Activated B cell treated with CpG ODN at 0.5 μM for 24 hours (primary cell): ENCODE measurements at regions of chr14 and their contacts with region 1.

Region 1: DNA sequence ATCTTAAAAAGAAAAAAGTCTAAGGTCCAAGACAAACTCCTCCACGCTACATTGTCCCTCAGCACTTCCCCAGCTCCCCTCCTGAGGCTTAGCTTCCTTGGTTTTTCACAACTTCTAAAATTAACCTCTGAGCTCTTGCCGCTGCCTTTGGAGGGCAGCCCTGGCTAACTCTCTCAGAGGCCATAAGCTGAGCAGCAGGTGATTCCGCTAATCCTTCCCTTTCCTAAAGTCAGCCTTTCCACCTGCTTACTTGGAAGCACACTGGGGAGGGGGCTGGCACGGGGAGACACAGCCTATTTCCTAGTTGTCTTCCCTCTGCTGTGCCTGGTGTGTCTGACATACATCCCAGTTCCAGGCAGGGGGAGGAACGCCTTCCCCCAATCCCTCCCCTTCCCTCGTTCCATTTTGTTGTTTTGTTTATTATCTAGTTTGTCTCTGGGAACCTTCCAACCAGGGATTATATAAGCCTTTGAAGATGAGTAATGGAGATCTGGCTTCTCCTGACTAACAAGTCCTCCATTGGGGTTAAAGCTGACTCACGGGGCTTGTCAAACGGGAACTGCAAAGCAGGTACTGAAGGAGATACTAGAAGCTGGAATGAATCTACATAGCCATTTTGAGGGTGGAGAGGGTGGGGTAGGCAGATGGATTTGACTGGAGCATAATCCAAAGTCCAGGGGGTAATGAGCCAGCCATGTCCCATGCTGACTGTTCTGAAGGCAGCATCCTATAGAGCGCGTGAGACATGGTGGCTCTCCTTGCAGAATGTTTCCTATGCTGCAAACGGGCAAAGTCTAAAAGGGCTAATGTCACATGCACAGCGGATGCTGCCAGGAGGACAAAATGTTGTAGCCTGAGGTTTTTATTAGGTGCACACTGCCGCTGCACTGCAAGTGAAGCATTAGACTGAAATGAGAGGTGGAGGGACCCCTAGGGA is 230.8 kb downstream of the FOXN3 start:
- DNase-seq: no peak
- ATAC-seq: no peak
- H3K4me3 Mint-ChIP-seq: peak overlapping the region; percentile 69
- H3K27ac Mint-ChIP-seq: peak overlapping the region; percentile 91
- H3K4me1 Mint-ChIP-seq: peaks cover 41% of the 10 kb centered on the region
- H3K27me3 Mint-ChIP-seq: no peaks in the 10 kb centered on the region
- CTCF ChIP-seq: no peak

Region 2: DNA sequence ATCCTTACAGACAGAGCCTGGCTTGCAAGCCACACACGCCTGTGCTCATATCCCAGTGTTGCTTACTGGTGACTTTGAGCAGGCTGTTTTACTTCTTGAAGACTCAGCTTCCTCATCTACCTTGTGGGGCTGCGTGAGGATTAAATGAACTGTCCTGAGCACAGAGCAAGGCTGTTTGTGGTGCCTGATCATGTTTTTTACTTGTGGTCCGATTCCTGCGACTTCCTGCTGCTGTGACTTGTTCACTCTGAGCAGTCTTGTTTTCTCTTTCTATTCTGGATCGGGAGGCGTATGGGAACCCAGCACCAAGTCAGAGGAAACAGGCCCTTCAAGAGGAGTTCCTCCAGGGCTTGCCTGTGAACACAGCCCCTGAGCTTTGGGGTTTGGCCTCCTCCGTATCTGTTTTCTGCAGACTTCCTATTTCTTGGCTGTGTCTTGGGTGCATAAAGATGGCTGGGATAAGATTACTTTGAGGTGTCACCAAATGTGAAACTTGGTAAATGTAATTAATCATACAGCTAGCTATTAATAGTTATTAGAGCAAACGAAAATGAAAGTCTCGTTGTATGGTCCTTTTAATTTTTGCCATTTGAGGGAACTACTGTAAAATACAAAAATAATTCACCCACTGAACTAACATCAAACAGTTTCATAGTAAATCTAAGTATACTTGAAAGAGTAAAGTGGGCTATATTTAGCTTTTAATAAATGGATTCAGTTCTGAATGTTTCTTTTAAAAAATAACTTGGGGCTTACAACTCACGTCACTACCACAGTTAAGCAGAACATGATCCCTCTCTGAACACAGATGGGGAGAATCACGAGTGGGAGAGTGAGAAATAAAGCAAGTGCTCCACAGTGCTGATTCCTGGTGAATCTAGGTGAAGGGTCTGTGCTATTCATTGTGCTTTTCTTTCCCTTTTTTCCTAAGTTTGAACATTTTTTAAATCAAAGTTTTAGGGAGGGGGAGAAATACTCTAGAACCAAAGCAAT is 20.7 kb before region 1 on chr14:
- CTCF ChIA-PET with region 1: no interaction called
- POLR2A ChIA-PET with region 1: no interaction called
- intact Hi-C with region 1: loop called (anchors 2 kb)
- DNase-seq: no peak
- ATAC-seq: peak; percentile 66
- H3K4me3 Mint-ChIP-seq: peak overlapping the region; percentile 83
- H3K27ac Mint-ChIP-seq: peak overlapping the region; percentile 90
- H3K4me1 Mint-ChIP-seq: peaks cover 36% of the 10 kb centered on the region
- H3K27me3 Mint-ChIP-seq: no peaks in the 10 kb centered on the region
- CTCF ChIP-seq: no peak

Region 3: DNA sequence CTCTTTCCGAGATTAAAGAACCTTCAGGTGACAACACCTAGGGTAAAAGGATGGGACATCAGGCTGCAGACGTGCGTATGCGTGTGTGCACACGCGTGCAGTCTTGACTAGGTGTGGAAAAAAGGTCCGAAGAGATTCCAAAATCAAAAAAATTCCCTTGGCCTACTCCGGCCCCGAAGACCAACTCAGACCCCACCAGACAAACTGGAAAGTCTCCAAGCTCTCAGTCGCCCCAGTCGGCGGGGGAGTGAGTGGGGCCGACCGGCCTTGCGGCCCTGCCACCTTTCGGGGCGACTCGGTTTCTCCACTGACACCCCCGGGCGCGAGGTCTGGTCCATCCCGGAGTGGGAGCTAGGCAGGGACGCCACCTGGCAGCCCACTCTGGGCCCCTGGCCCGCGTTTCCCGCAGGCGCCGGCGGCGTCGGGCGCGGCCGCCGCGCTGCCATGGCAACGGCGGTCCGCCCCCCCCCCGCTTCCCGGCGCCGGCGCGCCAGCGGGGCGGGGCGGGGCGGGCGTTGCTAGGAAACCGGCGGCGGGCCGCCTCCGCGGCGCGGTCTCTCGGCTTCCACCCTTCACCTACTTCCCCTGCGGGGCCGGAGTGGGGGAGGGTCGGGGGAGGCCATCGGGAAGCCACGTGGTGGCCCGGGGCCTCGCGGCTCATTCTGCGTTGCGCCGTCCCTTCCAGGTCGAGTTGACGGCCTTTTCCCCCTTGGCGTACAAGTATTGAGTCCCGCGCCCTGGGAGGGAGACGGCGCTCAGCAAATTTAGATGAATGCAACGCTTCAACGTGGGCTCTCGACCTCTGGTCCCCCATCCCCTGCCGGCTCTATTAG is 515.2 kb after region 1 on chr14:
- CTCF ChIA-PET with region 1: no interaction called
- POLR2A ChIA-PET with region 1: no interaction called
- intact Hi-C with region 1: loop called (anchors 5 kb)
- DNase-seq: peak; percentile 81
- ATAC-seq: peak; percentile 95
- H3K4me3 Mint-ChIP-seq: peak overlapping the region; percentile 77
- H3K27ac Mint-ChIP-seq: peak overlapping the region; percentile 86
- H3K4me1 Mint-ChIP-seq: peaks cover 28% of the 10 kb centered on the region
- H3K27me3 Mint-ChIP-seq: no peaks in the 10 kb centered on the region
- CTCF ChIP-seq: no peak